Activated CD4-positive, alpha-beta memory T cell treated with anti-CD3 and anti-CD28 coated beads for 36 hours (primary cell): ENCODE measurements at regions of chr3 and their contacts with region 1.

Region 1: GRCh38 chr3:129120254-129121004 is 1.2 kb downstream of the RAB43 start:
- DNase-seq: peak; percentile 97
- H3K4me3 Mint-ChIP-seq: peak overlapping the region; percentile 92
- H3K27ac Mint-ChIP-seq: peak overlapping the region; percentile 98
- H3K4me1 Mint-ChIP-seq: peaks cover 43% of the 10 kb centered on the region
- H3K27me3 Mint-ChIP-seq: no peaks in the 10 kb centered on the region

Region 2: DNA sequence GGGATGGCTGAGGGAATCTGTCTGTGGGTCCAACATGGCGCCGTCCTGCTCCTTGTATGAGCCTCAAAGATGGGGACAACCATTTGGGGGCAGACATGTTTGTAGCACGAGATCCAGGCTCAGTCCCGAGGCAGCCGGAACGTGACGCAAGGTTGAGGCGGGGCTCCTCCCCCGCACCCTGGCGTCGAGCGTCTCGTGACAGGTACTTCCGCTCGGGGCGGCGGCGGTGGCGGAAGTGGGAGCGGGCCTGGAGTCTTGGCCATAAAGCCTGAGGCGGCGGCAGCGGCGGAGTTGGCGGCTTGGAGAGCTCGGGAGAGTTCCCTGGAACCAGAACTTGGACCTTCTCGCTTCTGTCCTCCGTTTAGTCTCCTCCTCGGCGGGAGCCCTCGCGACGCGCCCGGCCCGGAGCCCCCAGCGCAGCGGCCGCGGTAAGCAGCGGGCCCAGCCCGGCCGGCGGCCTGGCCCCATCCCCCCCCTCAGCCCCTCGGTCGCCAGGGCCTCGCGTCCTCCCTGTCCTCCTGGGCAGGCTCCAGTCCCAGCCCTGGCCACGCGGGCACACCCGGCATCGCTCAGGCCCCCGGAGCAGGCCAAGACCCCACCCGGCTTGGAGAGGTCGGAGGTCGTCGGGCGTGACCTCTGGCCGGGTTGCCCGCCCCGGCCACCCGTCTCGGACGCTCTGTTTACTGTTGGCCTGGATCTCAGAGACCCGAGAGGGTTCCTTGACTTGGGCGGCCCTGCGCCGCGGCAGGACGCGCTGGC is 394.3 kb before region 1 on chr3 and contains the start of gene RAB7A:
- CTCF ChIA-PET with region 1: no interaction called
- POLR2A ChIA-PET with region 1: no interaction called
- intact Hi-C with region 1: loop called (anchors 5 kb)
- DNase-seq: peak; percentile 99
- H3K4me3 Mint-ChIP-seq: peak within 1 kb of the TSS; percentile 93
- H3K27ac Mint-ChIP-seq: peak within 1 kb of the TSS; percentile 87
- H3K4me1 Mint-ChIP-seq: peaks cover 50% of the 10 kb centered on the region
- H3K27me3 Mint-ChIP-seq: no peaks in the 10 kb centered on the region
- total RNA-seq, gene RAB7A: 264 to 272 TPM

Region 3: DNA sequence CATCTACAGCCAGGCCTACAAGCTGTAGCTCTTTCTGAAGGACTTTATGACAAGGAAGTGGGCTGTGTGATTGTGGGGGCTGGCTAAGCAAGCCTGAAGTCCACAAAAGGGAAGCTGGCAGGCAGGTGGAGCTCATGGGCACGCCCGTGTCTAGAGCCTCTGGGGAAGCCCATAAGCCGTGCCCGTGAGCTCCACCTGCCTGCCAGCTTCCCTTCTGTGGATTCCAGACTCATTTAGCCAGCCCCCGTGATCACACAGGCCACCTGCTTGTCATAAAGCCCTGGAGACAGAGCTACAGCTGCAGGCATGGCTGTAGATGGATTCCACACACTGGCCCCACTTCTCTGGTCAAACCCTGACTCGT is 104.1 kb before region 1 on chr3:
- CTCF ChIA-PET with region 1: interaction called, 6 read pairs
- POLR2A ChIA-PET with region 1: interaction called, 15 read pairs
- intact Hi-C with region 1: no loop called
- DNase-seq: peak; percentile 80
- H3K4me3 Mint-ChIP-seq: peak overlapping the region; percentile 62
- H3K27ac Mint-ChIP-seq: peak overlapping the region; percentile 93
- H3K4me1 Mint-ChIP-seq: peaks cover 34% of the 10 kb centered on the region
- H3K27me3 Mint-ChIP-seq: no peaks in the 10 kb centered on the region

Region 4: GRCh38 chr3:129052675-129053074 is 67.8 kb before region 1 on chr3:
- CTCF ChIA-PET with region 1: interaction called, 63 read pairs
- POLR2A ChIA-PET with region 1: interaction called, 4 read pairs
- intact Hi-C with region 1: loop called (anchors 1 kb)
- DNase-seq: no peak
- H3K4me3 Mint-ChIP-seq: no peak overlapping the region
- H3K27ac Mint-ChIP-seq: no peak overlapping the region
- H3K4me1 Mint-ChIP-seq: peaks cover 8% of the 10 kb centered on the region
- H3K27me3 Mint-ChIP-seq: no peaks in the 10 kb centered on the region

Region 5: DNA sequence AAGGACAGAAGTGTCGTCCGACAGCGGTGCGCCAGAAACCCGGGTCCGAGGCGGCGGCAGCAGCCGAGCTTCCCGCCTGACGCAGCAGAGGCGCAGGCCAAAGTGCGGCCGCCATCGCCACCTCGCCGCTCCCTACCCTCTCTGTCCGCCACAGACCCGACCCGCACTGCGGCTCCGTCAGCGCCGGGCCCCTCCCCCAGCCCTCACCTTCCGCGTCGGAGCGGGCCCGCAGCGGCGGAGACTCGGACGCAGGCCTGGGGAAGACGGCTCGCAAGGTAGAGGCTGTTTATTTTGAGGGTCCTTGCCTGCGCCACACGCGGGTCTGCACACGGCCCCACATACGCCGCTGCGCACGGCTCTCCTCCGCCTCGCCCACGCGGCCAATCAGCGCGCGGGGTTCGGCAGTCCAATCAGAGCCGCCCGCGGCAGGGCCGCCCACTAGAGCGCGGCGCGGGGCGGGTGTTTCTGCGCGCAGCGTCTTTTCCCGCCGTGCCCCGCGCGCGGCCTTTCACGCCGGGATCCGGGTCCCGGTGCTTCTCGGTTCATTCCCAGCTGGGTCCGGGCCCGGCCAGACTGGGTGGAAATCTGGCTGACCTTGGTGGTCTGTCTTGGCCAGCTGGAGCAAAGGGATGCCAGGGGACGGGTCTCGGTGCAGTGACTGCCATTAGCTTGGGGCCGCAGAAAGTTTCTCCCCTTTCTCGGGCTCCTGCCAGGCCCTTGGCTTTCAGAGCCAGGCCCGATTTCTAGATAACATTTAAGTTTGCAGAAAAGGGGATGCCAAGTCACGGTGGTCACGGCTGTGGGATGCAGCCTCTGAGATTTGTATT is 63.4 kb after region 1 on chr3 and contains the start of gene CNBP:
- CTCF ChIA-PET with region 1: no interaction called
- POLR2A ChIA-PET with region 1: interaction called, 29 read pairs
- intact Hi-C with region 1: loop called (anchors 1 kb)
- DNase-seq: peak; percentile 95
- H3K4me3 Mint-ChIP-seq: peak within 1 kb of the TSS; percentile 97
- H3K27ac Mint-ChIP-seq: peak within 1 kb of the TSS; percentile 96
- H3K4me1 Mint-ChIP-seq: peaks cover 27% of the 10 kb centered on the region
- H3K27me3 Mint-ChIP-seq: no peaks in the 10 kb centered on the region
- total RNA-seq, gene CNBP: 342 to 348 TPM

Region 6: DNA sequence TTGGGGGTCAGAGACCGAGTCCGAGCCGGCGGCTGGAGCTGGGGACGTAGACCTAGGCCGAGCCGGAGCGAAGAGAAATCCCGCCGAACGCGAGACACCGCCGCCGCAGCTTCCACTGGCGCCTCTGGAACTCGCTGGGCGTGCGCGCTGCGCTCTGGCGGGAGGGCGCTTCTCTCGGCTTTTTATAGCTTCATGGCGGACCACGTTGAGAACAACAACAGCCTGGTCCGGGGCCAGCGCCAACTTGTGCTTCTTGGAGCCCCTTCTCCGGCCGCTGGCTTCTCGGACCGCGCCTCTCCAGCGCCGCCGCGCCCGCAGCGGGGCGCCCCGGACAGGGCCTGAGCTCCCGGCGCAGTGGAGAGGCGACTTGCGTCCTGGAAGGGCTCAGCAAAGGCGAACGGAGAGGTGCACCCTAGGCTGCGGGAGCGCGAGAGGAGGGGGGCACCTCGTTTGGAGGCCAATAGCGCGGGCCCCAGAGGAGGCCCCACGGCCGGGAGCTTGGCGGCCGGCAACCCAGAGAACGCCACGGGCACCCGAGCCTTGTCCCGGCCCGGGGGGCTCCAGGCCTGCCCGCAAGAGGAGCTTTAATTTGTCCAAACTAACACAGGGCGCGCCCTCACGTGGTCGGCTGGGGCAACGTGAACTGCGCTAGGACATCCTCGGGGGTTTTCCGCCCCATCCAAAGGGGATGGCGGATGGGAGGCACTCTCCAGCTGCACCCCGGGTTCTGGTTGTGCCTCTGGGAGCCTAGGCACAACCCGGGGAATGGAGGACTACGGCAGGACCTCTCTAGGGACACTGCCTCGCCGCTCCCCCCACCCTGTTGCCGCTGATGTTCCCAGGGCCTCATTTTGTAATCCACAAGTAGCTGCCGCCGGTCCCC is 195.9 kb after region 1 on chr3:
- CTCF ChIA-PET with region 1: no interaction called
- POLR2A ChIA-PET with region 1: interaction called, 26 read pairs
- intact Hi-C with region 1: no loop called
- DNase-seq: peak; percentile 90
- H3K4me3 Mint-ChIP-seq: peak overlapping the region; percentile 93
- H3K27ac Mint-ChIP-seq: peak overlapping the region; percentile 89
- H3K4me1 Mint-ChIP-seq: peaks cover 26% of the 10 kb centered on the region
- H3K27me3 Mint-ChIP-seq: no peaks in the 10 kb centered on the region